ENCODE measurements at regions of chr2 and their contacts with region 1.

Region 1: DNA sequence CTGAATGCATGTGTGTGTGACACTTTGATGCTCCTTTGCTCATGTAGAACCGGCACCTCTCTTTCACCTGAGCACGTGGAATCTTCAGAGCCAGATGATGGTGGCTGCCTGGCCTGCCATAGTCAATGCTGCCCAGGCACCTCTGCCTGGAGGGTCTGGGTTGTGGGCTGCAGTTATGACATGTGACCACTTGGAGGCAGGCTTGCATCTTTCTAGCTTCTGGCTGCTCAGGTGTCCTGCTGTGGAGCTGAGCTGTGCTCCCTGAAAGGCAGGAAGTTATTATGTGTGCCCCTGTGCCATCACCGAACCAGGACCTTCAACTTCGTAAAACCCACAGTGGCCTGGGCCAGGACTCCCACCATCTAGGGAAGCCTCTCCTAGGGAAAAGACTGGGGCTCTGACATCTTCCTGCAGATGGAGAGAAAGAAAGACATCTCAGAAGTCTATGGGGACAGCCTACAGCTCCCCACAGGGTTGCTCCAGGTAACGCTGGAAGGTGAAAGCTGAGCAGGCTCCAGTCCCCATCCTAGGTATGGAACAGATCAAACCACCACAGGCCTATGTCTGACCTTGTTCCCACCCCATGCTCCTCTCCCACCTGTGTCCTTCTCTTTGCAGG is 30.2 kb downstream of the PSD4 start:
- DNase-seq: peak; percentile 81
- H3K4me3 ChIP-seq: no peak overlapping the region
- H3K27ac ChIP-seq: no peak overlapping the region
- H3K4me1 ChIP-seq: no peaks in the 10 kb centered on the region
- H3K27me3 ChIP-seq: no peaks in the 10 kb centered on the region
- CTCF ChIP-seq: peak; percentile 70

Region 2: DNA sequence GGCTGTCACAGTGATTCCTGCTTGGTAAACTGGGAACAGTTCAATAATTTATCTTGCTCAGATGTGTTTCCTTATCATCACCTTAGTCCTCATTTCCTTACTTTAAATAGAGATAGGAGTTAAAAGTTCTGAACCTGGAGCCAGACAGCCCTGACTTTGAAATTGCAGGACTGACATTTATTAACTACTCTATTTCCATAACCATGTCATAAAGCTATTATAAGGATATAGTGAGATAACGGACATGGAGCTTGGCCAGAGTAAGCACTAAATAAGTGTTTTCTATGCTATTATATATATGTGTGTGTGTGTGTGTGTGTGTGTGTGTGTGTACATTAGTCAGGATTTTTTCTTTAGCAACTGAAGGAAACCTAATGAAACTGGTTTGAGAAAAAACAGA is 470.1 kb before region 1 on chr2:
- intact Hi-C with region 1: no loop called
- DNase-seq: no peak
- H3K4me3 ChIP-seq: no peak overlapping the region
- H3K27ac ChIP-seq: no peak overlapping the region
- H3K4me1 ChIP-seq: no peaks in the 10 kb centered on the region
- H3K27me3 ChIP-seq: no peaks in the 10 kb centered on the region
- CTCF ChIP-seq: no peak

Region 3: GRCh38 chr2:113248997-113249770 is 45.2 kb after region 1 on chr2:
- intact Hi-C with region 1: loop called (anchors 2 kb)
- DNase-seq: peak; percentile 86
- H3K4me3 ChIP-seq: no peak overlapping the region
- H3K27ac ChIP-seq: no peak overlapping the region
- H3K4me1 ChIP-seq: no peaks in the 10 kb centered on the region
- H3K27me3 ChIP-seq: no peaks in the 10 kb centered on the region
- CTCF ChIP-seq: peak; percentile 94

Measured in colonic mucosa (tissue), 4 donors.